Uterus (tissue), 4 donors: ENCODE measurements at regions of chr19 and their contacts with region 1.

Region 1: DNA sequence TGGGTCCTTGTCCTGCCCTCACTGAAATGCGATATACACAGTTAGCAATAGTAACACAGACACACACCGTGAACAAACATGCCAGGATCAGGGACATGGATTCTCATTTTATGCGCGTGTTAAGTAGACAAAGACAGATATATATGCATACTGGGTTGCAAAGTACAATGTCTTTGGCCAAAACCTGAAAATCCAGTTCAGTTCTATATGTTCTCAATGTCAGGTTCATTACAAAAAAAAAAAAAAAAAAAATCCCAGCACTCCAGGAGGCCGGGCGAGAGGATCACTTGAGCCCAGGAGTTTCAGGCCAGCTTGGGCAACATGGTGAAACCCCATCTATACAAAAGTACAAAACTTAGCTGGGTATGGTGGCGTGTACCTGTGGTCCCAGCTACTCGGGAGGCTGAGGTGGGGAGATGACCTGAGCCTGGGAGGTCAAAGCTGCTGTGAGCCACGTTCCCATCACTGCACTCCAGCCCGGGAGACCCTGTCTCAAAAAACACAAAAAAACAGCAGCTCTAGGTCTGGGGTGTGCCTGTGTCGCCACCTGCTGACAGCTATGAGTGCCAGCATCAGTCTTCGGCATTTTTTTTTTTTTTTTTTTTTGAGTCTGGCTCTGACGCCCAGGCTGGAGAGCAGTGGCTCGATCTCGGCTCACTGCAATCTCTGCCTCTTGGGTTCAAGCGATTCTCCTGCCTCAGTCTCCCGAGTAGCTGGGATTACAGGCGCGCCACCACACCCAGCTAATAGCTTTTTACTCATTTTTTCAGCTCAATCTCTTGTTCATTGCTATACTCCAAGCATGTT is 10.3 kb downstream of the AP2S1 start:
- DNase-seq: peak; percentile 57 to 59
- H3K4me3 ChIP-seq: no peak overlapping the region
- H3K27ac ChIP-seq: peak overlapping the region; percentile 39 to 56
- H3K4me1 ChIP-seq: no peaks in the 10 kb centered on the region
- H3K27me3 ChIP-seq: no peaks in the 10 kb centered on the region
- CTCF ChIP-seq: peak; percentile 77 to 88 (median 85)
- POLR2A ChIP-seq: no peak

Region 2: DNA sequence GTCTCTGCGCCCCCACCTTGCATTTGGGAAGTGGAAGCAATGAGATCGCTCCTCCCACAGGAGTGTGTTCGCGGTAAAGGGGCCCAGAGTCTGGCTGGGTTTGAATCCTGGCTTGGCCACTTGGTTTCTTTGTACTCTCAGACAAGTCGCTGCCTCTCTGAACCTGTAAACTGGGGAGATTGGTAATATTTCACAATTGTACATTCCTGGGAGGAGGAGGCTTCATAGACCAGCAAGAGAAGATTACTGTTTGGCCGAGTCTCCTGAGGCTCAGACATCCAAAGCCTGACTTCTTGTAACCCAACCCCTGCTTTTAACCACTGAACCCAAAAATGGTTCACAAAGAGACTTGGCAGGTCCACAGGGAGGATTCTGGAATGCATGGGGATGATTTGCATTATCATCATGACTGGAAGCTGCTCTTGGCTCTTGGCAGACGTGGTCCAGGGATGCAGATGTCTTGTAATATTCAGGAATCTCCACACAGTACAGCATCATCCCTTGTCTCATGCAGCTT is 80.5 kb before region 1 on chr19:
- intact Hi-C with region 1: loop called (anchors 5 kb)
- DNase-seq: peak; percentile 65 to 71
- H3K4me3 ChIP-seq: no peak overlapping the region
- H3K27ac ChIP-seq: peak overlapping the region; percentile 41 to 46
- H3K4me1 ChIP-seq: peaks cover 0 to 4% of the 10 kb centered on the region in 2 donors
- H3K27me3 ChIP-seq: no peaks in the 10 kb centered on the region
- CTCF ChIP-seq: no peak
- POLR2A ChIP-seq: no peak

Region 3: DNA sequence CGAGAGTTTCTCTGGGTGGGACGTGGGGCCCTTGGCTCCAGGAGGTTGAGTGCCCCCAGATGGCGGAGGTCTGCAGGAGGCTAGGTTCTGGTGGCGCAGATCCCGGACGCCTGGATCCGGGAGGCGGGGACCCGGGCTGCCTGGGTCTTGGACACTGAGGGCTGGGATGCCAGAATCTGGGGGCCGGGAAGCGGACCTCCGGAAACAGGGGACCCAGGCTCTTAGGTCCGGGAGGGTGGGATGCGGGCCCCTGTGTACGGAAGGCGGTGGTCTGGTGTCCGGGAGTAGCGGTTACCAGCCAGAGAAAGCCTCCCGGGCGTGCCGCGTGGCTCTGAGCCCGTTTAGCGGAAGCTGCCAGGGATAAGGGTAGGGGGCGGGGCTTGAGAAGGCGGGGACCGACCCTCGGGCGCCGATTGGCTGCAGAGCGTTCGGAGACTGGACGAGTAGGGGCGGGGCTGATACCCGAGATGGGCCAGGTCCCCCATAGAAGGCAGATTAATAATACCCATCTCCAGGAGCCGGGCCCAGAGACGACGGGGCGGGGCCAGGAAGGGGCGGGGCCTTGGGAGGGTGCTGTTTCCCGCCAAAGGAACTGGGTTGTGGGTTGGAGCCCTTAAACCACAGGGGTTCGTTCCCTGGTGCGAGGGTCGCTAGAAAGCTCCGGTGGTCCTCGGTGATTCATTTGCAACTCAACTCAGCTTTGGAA is 51.9 kb before region 1 on chr19 and contains the start of gene SLC1A5:
- intact Hi-C with region 1: loop called (anchors 10 kb)
- DNase-seq: peak; percentile 99
- H3K4me3 ChIP-seq: peak within 1 kb of the TSS; percentile 65 to 74
- H3K27ac ChIP-seq: peak within 1 kb of the TSS; percentile 91 to 92
- H3K4me1 ChIP-seq: peaks cover 0 to 18% of the 10 kb centered on the region in 2 donors
- H3K27me3 ChIP-seq: no peaks in the 10 kb centered on the region
- CTCF ChIP-seq: no peak
- POLR2A ChIP-seq: peak; percentile 93 to 96
- total RNA-seq, gene SLC1A5: 13.8 to 78.0 (median 32.4) TPM